ENCODE measurements at regions of chr13 and their contacts with region 1.

Region 1: GRCh38 chr13:111474136-111475002 is 153.9 kb downstream of the TEX29 start:
- DNase-seq: no peak
- H3K4me3 ChIP-seq: no peak overlapping the region
- H3K27ac ChIP-seq: no peak overlapping the region
- H3K4me1 ChIP-seq: no peaks in the 10 kb centered on the region
- H3K27me3 ChIP-seq: no peaks in the 10 kb centered on the region
- CTCF ChIP-seq: no peak
- EP300 ChIP-seq: no peak
- POLR2A ChIP-seq: no peak

Region 2: DNA sequence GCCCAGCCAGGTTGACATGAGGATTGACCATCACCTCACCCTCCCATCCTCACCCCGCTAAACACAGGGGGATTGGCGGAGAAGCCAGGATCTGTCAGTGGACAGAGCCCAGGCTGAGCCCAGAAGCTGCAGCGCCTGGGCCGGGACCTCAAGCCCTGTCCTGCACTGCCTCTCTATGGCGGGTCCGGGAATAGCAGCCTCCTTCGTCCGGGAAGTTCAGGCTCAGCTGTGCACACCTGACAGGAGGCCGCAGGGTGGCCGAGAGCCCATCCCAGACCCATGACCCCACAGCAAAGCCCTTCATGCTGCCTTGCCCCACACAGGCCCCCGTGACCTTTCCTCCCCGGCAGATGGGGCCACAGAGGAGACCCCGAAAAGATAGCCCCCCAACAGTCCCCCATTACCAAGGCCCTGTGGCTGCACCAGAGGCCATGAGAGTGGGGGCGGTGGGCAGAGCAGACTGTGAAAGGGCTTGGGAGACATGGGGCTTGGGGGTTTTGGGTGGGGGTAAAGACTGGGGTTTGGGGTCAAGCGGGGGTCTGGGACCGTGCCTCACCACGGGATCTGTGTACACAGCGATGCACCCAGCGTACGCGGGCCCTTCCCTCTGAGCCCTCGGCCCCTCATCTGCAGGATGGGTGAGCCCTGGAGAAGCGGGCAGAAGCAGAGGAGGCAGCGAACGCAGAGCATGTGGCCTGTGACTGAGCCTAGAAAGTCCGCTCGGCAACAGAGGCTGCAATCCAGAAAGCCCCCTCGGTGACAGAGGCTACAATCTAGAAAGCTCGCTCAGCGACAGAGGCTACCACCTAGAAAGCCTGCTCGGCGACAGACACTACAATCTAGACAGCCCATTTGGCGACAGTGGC is 969.9 kb after region 1 on chr13:
- intact Hi-C with region 1: loop called in 3 of 4 experiments (anchors 10 kb)
- DNase-seq: peak in 2 of 5 donors; percentile 41 to 52
- H3K4me3 ChIP-seq: no peak overlapping the region
- H3K27ac ChIP-seq: no peak overlapping the region
- H3K4me1 ChIP-seq: no peaks in the 10 kb centered on the region
- H3K27me3 ChIP-seq: no peaks in the 10 kb centered on the region
- CTCF ChIP-seq: no peak
- EP300 ChIP-seq: no peak
- POLR2A ChIP-seq: no peak

Region 3: GRCh38 chr13:112606109-112607001 is 1132.0 kb after region 1 on chr13:
- intact Hi-C with region 1: loop called in 2 of 4 experiments (anchors 5 to 10 kb)
- DNase-seq: peak; percentile 92 to 95 (median 93)
- H3K4me3 ChIP-seq: peak overlapping the region; percentile 34
- H3K27ac ChIP-seq: peak overlapping the region in 1 of 2 donors; percentile 70
- H3K4me1 ChIP-seq: no peaks in the 10 kb centered on the region
- H3K27me3 ChIP-seq: no peaks in the 10 kb centered on the region
- CTCF ChIP-seq: peak; percentile 89 to 94 (median 90)
- EP300 ChIP-seq: no peak
- POLR2A ChIP-seq: no peak

Measured in ovary (tissue), 10 donors.